Mammary epithelial cell (primary cell): ENCODE measurements at regions of chr9 and their contacts with region 1.

Region 1: DNA sequence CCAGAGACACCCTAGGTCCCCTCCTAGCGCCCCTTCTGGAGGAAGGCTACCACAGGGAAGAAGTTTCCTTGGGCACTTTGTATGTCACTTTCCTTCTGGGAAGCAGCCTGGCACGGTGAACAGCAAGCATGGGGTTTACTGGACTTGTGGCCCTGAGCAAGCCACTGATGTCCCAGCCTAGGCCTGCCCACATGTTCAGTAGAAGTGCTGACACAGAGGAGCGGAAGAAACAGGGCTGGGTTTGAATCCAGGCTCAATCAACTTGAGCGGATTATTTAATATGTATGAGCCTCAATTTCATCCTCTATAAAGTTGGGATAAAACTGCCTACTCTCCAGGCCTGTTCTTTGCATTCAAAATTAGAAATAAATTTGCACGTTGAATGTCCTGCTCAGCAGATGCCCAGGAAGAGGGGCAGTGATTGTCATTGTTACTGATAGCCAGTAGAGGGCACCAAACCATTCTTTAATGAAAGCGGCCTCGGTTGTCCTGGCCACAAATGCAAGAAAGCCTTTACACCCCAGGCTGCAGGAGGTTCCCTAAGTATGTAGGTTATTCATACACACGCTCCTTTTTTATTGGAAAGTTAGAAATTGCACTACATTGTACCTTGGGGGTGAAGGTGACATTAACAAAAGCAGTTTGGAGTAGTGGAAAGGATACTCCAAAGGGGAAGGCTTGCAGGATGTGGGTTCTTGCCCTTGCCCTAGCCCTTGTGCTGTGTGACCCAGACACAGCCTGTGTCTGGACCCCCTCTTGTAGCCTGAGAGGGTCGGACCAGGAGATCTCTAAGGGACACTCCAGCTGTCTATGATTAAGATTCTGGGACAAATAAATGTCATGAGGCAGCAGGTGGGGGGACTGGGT is 13.4 kb upstream of the XPA start:
- DNase-seq: peak; percentile 59
- H3K4me3 ChIP-seq: no peak overlapping the region
- H3K27ac ChIP-seq: no peak overlapping the region
- H3K4me1 ChIP-seq: peaks cover 24% of the 10 kb centered on the region
- H3K27me3 ChIP-seq: peaks cover 10% of the 10 kb centered on the region
- CTCF ChIP-seq: peak; percentile 74 to 79

Region 2: DNA sequence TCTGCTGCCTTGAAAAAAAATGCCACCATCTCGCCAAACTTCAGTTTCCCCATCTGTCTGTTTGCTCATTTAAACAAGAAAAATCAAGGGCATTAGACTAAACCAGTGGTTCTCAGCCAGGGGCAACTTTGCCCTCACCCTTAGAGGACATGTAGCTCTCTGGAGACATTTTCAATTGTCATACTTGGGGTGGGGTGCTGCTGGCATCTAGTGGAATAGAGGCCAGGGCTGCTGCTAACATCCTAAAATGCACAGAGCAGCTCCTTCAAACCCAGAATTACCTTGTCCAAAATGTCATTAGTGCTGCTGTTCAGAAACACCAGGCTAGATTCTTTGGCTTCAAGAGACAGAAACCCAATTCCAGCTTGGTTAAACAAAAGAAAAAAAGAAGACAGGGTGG is 71.3 kb after region 1 on chr9:
- CTCF ChIA-PET with region 1: no interaction called
- dilution Hi-C with region 1: no loop called
- in situ Hi-C with region 1: no loop called
- intact Hi-C with region 1: loop called (anchors 1 kb)
- DNase-seq: no peak
- H3K4me3 ChIP-seq: no peak overlapping the region
- H3K27ac ChIP-seq: no peak overlapping the region
- H3K4me1 ChIP-seq: no peaks in the 10 kb centered on the region
- H3K27me3 ChIP-seq: no peaks in the 10 kb centered on the region
- CTCF ChIP-seq: peak in 1 of 2 donors; percentile 17

Region 3: GRCh38 chr9:97811527-97812246 is 101.1 kb after region 1 on chr9:
- CTCF ChIA-PET with region 1: no interaction called
- dilution Hi-C with region 1: no loop called
- in situ Hi-C with region 1: no loop called
- intact Hi-C with region 1: loop called (anchors 2 kb)
- DNase-seq: peak; percentile 73
- H3K4me3 ChIP-seq: no peak overlapping the region
- H3K27ac ChIP-seq: peak overlapping the region; percentile 60
- H3K4me1 ChIP-seq: peaks cover 48% of the 10 kb centered on the region
- H3K27me3 ChIP-seq: no peaks in the 10 kb centered on the region
- CTCF ChIP-seq: no peak

Region 4: GRCh38 chr9:97873877-97874276 is 163.3 kb after region 1 on chr9:
- CTCF ChIA-PET with region 1: no interaction called
- dilution Hi-C with region 1: no loop called
- in situ Hi-C with region 1: no loop called
- intact Hi-C with region 1: loop called (anchors 1 kb)
- DNase-seq: peak; percentile 52
- H3K4me3 ChIP-seq: no peak overlapping the region
- H3K27ac ChIP-seq: no peak overlapping the region
- H3K4me1 ChIP-seq: peaks cover 37% of the 10 kb centered on the region
- H3K27me3 ChIP-seq: no peaks in the 10 kb centered on the region
- CTCF ChIP-seq: no peak

Region 5: DNA sequence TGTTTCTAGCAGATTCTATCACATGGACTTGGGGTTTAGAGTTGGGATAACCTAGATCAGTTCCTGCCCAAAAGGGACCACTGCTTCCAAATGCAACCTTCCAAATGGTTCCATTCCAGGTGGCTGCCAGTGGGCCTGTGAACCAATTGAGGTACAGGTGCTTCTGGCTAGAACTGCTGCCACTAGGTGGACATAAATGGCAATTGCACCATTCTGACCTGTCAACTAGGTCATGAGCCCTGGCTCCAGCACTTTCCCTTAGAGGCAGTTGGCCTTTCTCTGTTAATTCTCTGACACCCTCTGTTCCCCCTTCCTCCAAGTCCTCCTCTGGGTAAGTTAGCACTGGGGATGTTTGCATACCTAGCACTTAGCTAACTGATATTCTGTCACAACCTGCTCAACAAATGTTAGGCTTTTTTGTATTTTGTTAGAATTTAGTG is 244.0 kb after region 1 on chr9:
- CTCF ChIA-PET with region 1: no interaction called
- dilution Hi-C with region 1: no loop called
- in situ Hi-C with region 1: no loop called
- intact Hi-C with region 1: loop called (anchors 1 kb)
- DNase-seq: peak; percentile 36
- H3K4me3 ChIP-seq: no peak overlapping the region
- H3K27ac ChIP-seq: no peak overlapping the region
- H3K4me1 ChIP-seq: no peaks in the 10 kb centered on the region
- H3K27me3 ChIP-seq: no peaks in the 10 kb centered on the region
- CTCF ChIP-seq: peak; percentile 68 to 82